Naive thymus-derived CD8-positive, alpha-beta T cell (primary cell): ENCODE measurements at regions of chr1 and their contacts with region 1.

Region 1: GRCh38 chr1:45521398-45522323 is at the start of gene PRDX1:
- DNase-seq: peak; percentile 87 to 97 (median 93)
- ATAC-seq: peak; percentile 86 to 87
- H3K4me3 Mint-ChIP-seq: peak within 1 kb of the TSS; percentile 88 to 97 (median 95)
- H3K27ac Mint-ChIP-seq: peak within 1 kb of the TSS; percentile 88 to 96 (median 92)
- H3K4me1 Mint-ChIP-seq: peaks cover 13 to 40% (median 34%) of the 10 kb centered on the region in 4 donors
- H3K27me3 Mint-ChIP-seq: no peaks in the 10 kb centered on the region
- polyA plus RNA-seq, gene PRDX1: 174 to 214 (median 205) TPM

Region 2: GRCh38 chr1:45155423-45155822 is 366.2 kb before region 1 on chr1:
- POLR2A ChIA-PET with region 1: no interaction called
- DNase-seq: no peak
- ATAC-seq: no peak
- H3K4me3 Mint-ChIP-seq: no peak overlapping the region
- H3K27ac Mint-ChIP-seq: no peak overlapping the region
- H3K4me1 Mint-ChIP-seq: peaks cover 0 to 4% (median 2%) of the 10 kb centered on the region in 4 donors
- H3K27me3 Mint-ChIP-seq: peaks cover 0 to 2% (median 1%) of the 10 kb centered on the region in 5 donors

Region 3: DNA sequence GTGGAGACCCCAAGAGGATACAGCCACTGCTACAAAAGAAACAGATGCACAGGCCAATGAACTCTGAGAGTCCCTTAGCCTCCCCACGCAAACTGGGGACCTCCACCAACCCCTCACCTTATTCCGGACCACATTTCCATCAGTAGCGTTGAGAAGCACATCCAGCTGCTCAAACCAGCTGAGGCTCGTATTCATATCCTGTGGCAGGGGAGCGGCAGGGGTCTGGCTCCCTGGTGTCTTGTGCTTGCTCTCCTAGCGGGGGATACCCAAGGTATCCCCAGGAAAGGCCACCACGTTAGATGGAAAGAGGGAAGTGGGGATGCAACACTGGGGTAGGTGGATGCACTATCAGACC is 22.3 kb before region 1 on chr1:
- POLR2A ChIA-PET with region 1: interaction called, 29 read pairs
- DNase-seq: no peak
- ATAC-seq: no peak
- H3K4me3 Mint-ChIP-seq: peak overlapping the region; percentile 89 to 98 (median 95)
- H3K27ac Mint-ChIP-seq: peak overlapping the region; percentile 72 to 97 (median 95)
- H3K4me1 Mint-ChIP-seq: peaks cover 26 to 40% (median 36%) of the 10 kb centered on the region in 4 donors
- H3K27me3 Mint-ChIP-seq: no peaks in the 10 kb centered on the region

Region 4: DNA sequence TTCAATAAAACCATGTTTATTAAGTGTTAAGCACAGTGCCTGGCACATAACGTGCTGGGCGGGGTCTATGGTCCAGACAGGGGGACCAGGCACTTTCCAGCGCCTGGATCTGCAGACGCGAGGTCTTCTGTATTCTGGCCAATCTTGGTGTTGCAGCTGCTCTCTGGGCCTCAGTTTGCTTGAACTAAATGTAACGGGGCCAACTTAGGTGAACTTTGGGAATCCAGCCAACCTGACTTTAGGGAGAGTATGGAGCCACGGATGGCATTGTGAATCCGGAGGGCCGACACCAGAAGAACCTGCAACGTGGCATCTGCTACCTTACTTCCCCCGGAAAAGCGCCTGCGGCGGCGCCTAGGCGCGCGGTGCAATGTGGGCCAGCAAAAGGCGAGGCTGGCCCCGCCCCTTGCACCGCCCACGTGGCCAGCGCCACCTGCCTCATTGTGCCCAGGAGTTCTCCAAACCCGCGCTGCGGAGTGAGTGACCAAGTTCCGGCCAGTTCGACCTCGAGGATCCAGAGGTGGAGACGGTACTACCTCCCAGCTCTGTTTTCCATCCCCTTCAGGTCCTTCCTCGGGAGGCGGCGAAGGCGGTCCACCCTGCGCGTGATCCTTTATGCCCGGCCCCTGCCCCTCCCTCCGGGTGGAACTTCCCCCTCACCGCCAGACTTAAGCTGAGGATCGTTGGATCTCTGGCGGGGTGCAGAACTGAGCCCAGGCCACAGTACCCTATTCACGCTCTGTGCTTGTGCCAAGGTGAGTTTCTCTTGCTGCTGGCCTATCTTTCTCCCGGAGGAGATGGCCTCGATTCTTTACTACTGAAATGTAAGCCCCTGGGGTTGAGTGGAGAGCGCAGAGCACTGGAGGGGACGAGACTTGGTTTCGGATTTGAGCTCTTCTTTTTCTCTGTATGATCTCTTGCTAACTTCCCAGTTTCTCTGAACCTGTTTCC is 29.0 kb after region 1 on chr1 and contains the start of gene AKR1A1:
- POLR2A ChIA-PET with region 1: interaction called, 44 read pairs
- DNase-seq: peak; percentile 77 to 92 (median 83)
- ATAC-seq: peak; percentile 93 to 95
- H3K4me3 Mint-ChIP-seq: peak within 1 kb of the TSS; percentile 95 to 98 (median 96)
- H3K27ac Mint-ChIP-seq: peak within 1 kb of the TSS; percentile 87 to 99 (median 96)
- H3K4me1 Mint-ChIP-seq: peaks cover 8 to 29% (median 25%) of the 10 kb centered on the region in 4 donors
- H3K27me3 Mint-ChIP-seq: no peaks in the 10 kb centered on the region
- polyA plus RNA-seq, gene AKR1A1: 82.8 to 96.3 (median 85.5) TPM

Region 5: DNA sequence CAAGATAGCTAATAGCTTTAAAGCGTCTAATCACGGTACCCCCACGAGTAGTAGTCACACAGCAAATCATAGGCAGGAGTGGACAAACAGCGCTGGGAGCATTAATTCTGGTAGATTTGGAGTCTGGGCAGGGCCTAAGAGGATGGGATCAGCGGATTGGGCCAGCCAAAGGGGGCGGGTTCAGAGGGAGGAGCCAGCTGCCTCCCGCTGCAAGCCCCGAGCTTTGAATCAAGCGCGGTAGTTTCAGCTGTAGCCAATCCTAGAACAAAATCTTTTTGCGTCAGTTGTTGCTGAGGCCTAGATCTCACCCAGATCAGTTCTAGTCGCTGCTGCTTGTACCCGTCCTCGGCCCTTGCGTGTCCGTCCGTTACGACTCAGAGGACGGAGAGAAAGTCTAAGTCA is 61.6 kb after region 1 on chr1:
- POLR2A ChIA-PET with region 1: interaction called, 34 read pairs
- DNase-seq: peak in 9 of 10 donors; percentile 88 to 96 (median 94)
- ATAC-seq: peak; percentile 71 to 72
- H3K4me3 Mint-ChIP-seq: peak overlapping the region; percentile 93 to 100 (median 99)
- H3K27ac Mint-ChIP-seq: peak overlapping the region; percentile 94 to 100 (median 99)
- H3K4me1 Mint-ChIP-seq: peaks cover 15 to 41% (median 36%) of the 10 kb centered on the region in 4 donors
- H3K27me3 Mint-ChIP-seq: no peaks in the 10 kb centered on the region